ENCODE measurements at regions of chr5 and their contacts with region 1.

Region 1: GRCh38 chr5:35785601-35786085 is 71.0 kb upstream of the IL7R start:
- DNase-seq: peak; percentile 76
- H3K4me3 Mint-ChIP-seq: peak overlapping the region; percentile 32
- H3K27ac Mint-ChIP-seq: peak overlapping the region; percentile 88
- H3K4me1 Mint-ChIP-seq: peaks cover 79% of the 10 kb centered on the region
- H3K27me3 Mint-ChIP-seq: no peaks in the 10 kb centered on the region

Region 2: DNA sequence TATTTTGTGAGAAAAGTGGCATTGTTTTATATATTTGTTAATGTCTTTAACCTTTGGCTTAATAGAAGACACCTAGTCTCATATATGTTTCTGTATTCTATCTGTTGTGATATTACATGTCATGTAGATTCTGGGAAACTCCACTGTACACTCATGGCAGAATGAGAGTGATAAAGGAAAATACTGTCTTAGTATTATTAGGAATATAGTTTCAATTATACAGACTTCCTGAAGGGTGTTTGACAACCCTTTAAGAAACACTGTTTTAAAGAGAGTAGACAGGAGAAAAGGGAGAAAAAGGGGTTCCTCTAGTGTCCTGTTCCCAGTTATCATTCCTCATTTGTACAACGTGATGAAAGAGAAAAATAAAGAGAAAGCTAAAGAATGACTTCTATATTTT is 210.1 kb before region 1 on chr5:
- CTCF ChIA-PET with region 1: no interaction called
- intact Hi-C with region 1: no loop called
- DNase-seq: no peak
- H3K4me3 Mint-ChIP-seq: no peak overlapping the region
- H3K27ac Mint-ChIP-seq: no peak overlapping the region
- H3K4me1 Mint-ChIP-seq: no peaks in the 10 kb centered on the region
- H3K27me3 Mint-ChIP-seq: peaks cover 9% of the 10 kb centered on the region

Region 3: DNA sequence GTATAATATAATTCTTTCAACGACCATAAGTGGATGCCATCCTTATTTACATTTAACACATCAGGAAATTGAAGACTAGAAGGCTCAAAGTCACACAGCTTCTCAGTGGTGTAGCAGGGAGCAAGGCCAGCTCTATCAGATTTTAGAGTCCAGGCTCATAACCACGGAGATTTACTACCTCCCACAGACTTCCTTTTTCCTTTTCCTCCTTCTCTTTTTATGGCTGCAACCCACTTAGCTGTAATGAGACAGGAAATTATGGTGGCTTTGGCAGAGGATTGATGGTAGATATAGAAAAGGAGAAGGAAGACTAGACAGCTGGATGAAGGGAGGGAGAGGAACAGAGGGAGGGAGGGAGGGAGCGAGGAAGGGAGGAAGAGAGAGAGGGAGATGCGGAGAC is 120.5 kb before region 1 on chr5:
- CTCF ChIA-PET with region 1: no interaction called
- intact Hi-C with region 1: loop called (anchors 2 kb)
- DNase-seq: no peak
- H3K4me3 Mint-ChIP-seq: no peak overlapping the region
- H3K27ac Mint-ChIP-seq: no peak overlapping the region
- H3K4me1 Mint-ChIP-seq: peaks cover 45% of the 10 kb centered on the region
- H3K27me3 Mint-ChIP-seq: no peaks in the 10 kb centered on the region

Region 4: DNA sequence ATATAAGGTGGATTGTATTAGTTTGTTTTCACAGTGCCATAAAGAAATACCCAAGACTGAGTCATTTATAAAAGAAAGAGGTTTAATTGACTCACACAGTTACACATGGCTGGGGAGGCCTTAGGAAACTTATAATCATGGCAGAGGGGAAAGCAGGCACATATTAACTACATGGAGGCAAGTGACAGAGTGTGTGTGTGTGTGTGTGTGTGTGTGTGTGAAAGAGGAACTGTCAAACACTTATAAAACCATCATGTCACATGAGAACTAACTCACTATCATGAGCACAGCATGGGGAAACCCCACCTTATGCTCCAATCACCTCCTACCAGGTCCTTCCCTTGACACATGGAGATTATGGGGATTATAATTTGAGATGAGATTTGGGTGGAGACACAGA is 49.4 kb before region 1 on chr5:
- CTCF ChIA-PET with region 1: no interaction called
- intact Hi-C with region 1: loop called (anchors 2 kb)
- DNase-seq: peak; percentile 83
- H3K4me3 Mint-ChIP-seq: no peak overlapping the region
- H3K27ac Mint-ChIP-seq: peak overlapping the region; percentile 73
- H3K4me1 Mint-ChIP-seq: peaks cover 58% of the 10 kb centered on the region
- H3K27me3 Mint-ChIP-seq: no peaks in the 10 kb centered on the region

Region 5: GRCh38 chr5:35799753-35800152 is 14.1 kb after region 1 on chr5:
- CTCF ChIA-PET with region 1: interaction called, 35 read pairs
- intact Hi-C with region 1: loop called (anchors 1 kb)
- DNase-seq: no peak
- H3K4me3 Mint-ChIP-seq: no peak overlapping the region
- H3K27ac Mint-ChIP-seq: no peak overlapping the region
- H3K4me1 Mint-ChIP-seq: peaks cover 76% of the 10 kb centered on the region
- H3K27me3 Mint-ChIP-seq: no peaks in the 10 kb centered on the region

Region 6: GRCh38 chr5:35815089-35815936 is 29.7 kb after region 1 on chr5:
- CTCF ChIA-PET with region 1: interaction called, 56 read pairs
- intact Hi-C with region 1: loop called (anchors 1 kb)
- DNase-seq: peak; percentile 76
- H3K4me3 Mint-ChIP-seq: no peak overlapping the region
- H3K27ac Mint-ChIP-seq: no peak overlapping the region
- H3K4me1 Mint-ChIP-seq: peaks cover 45% of the 10 kb centered on the region
- H3K27me3 Mint-ChIP-seq: no peaks in the 10 kb centered on the region

Region 7: DNA sequence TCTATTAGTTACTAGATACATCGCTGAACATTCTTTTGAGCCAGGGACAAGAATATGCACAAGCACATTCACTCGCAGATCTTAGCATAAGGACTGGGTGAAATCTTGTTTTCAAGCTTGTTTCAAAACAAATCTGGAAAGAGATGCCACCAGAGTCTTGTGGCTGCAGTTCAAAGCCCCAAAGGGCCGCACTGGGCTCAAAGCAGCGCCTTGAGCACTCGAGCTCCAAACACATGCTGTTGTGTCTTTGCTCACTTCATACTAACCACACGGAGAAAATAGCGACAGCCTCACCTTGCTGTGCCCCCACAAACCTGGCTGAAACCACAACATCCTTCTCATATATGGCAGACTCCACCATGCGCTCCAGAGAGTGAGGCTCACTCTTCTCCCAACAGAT is 36.9 kb after region 1 on chr5:
- CTCF ChIA-PET with region 1: interaction called, 56 read pairs
- intact Hi-C with region 1: no loop called
- DNase-seq: peak; percentile 56
- H3K4me3 Mint-ChIP-seq: peak overlapping the region; percentile 30
- H3K27ac Mint-ChIP-seq: peak overlapping the region; percentile 95
- H3K4me1 Mint-ChIP-seq: peaks cover 87% of the 10 kb centered on the region
- H3K27me3 Mint-ChIP-seq: no peaks in the 10 kb centered on the region

Region 8: GRCh38 chr5:35832762-35833161 is 47.1 kb after region 1 on chr5:
- CTCF ChIA-PET with region 1: interaction called, 4 read pairs
- intact Hi-C with region 1: loop called (anchors 1 kb)
- DNase-seq: no peak
- H3K4me3 Mint-ChIP-seq: no peak overlapping the region
- H3K27ac Mint-ChIP-seq: peak overlapping the region; percentile 95
- H3K4me1 Mint-ChIP-seq: peaks cover 94% of the 10 kb centered on the region
- H3K27me3 Mint-ChIP-seq: no peaks in the 10 kb centered on the region